ENCODE measurements at regions of chr11 and their contacts with region 1.

Region 1: GRCh38 chr11:68093565-68093964 is 27.6 kb downstream of the CHKA start:
- DNase-seq: no peak
- H3K4me3 ChIP-seq: no peak overlapping the region
- H3K27ac ChIP-seq: no peak overlapping the region
- H3K27me3 ChIP-seq: no peaks in the 10 kb centered on the region
- CTCF ChIP-seq: no peak

Region 2: DNA sequence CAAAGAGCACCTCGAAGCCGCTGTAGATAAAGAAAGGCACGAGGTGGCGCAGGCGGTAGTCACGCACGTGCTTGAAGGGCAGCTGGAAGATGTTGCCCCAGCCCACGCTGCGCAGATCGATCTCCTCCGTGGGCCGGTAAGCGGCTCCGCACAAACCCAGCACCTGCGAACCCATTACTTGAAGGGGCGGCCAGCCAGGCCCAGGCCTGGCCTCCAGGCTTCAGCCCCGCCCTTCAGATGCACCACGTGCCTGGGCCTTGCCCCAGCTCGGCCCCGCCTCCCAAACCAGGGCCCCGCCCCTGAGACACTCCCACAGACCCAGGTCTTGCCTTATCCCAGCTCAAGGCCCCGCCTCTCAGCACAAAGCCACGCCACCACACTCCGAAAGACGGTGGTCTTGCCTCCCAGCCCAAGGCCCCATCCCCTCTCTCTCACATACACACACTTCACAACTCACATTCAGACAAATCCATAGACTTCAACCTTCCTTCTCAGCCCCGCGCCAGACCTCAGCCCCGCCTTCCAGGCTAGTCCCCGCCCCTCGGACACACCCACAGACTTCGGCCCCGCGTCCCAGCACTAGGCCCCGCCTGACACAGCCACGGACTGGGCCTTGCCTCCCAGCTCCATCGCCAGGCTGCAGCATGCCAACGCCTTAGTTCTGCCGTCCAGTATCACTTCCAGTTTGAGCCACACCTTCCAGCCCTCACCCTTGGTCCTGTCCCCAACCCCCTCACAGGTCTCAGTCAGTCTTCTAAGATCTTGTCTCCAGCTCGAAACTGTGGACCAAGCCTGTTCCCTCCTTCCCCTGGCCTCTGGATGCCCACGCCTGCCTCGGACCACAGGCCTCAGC is 96.7 kb before region 1 on chr11:
- CTCF ChIA-PET with region 1: interaction called, 11 read pairs
- POLR2A ChIA-PET with region 1: no interaction called
- DNase-seq: no peak
- H3K4me3 ChIP-seq: no peak overlapping the region
- H3K27ac ChIP-seq: no peak overlapping the region
- H3K27me3 ChIP-seq: no peaks in the 10 kb centered on the region
- CTCF ChIP-seq: no peak